ENCODE measurements at regions of chr1 and their contacts with region 1.

Region 1: GRCh38 chr1:8090241-8090702 is 64.2 kb upstream of the ERRFI1 start:
- DNase-seq: no peak
- ATAC-seq: peak; percentile 91
- H3K4me3 ChIP-seq: no peak overlapping the region
- H3K27ac ChIP-seq: peak overlapping the region; percentile 100
- H3K4me1 ChIP-seq: peaks cover 44% of the 10 kb centered on the region
- H3K27me3 ChIP-seq: no peaks in the 10 kb centered on the region
- CTCF ChIP-seq: no peak

Region 2: GRCh38 chr1:8061210-8061609 is 29.1 kb before region 1 on chr1:
- CTCF ChIA-PET with region 1: interaction called, 4 read pairs
- POLR2A ChIA-PET with region 1: interaction called, 11 read pairs
- in situ Hi-C with region 1: no loop called
- intact Hi-C with region 1: no loop called
- DNase-seq: peak; percentile 94
- ATAC-seq: peak; percentile 95
- H3K4me3 ChIP-seq: peak overlapping the region in 1 of 2 experiments; percentile 13; a peak in 1 of 4 replicates
- H3K27ac ChIP-seq: peak overlapping the region; percentile 99
- H3K4me1 ChIP-seq: peaks cover 53% of the 10 kb centered on the region
- H3K27me3 ChIP-seq: no peaks in the 10 kb centered on the region
- CTCF ChIP-seq: no peak

Region 3: DNA sequence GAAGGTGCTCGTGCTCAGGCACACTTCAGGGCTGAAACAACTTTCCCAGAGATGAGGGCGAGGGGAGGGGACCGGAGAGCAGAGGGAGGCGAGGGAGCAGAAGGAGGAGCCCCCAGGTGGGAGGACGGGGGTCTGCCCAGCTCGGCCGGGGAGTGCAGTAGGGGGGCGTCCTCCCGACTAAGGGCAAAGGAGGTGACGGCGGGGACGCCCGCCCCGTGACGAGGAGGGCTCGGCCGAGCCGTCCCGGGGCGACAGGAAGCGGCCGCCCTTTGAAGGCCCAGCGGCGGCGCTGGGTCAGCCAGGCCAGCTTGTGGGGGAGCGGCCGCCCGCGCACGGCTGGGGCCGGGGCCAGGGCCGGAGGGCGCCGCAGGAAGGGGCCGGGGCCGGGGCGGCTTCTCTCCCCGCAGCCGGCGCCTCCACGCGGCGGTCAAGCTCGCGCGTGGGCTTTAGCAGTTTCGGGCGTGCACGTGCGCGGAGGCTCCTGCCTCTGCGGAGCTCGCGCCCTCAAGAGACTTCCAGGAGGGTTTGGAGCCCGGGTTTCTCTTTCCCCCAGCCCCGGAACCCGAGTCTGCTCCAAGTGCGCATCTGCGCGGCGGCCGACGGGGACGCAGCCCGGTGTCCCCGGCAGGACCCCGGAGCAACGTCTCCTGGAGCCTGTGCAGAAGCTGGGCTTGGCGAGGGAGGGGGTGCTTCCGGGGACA is 126.9 kb after region 1 on chr1:
- CTCF ChIA-PET with region 1: no interaction called
- POLR2A ChIA-PET with region 1: no interaction called
- in situ Hi-C with region 1: no loop called
- intact Hi-C with region 1: no loop called
- DNase-seq: no peak
- ATAC-seq: no peak
- H3K4me3 ChIP-seq: no peak overlapping the region
- H3K27ac ChIP-seq: peak overlapping the region; percentile 55; the same call in 1 of the 2 replicates
- H3K4me1 ChIP-seq: peaks cover 26% of the 10 kb centered on the region
- H3K27me3 ChIP-seq: no peaks in the 10 kb centered on the region
- CTCF ChIP-seq: no peak

Region 4: GRCh38 chr1:8343464-8344001 is 253.3 kb after region 1 on chr1:
- CTCF ChIA-PET with region 1: no interaction called
- POLR2A ChIA-PET with region 1: interaction called, 16 read pairs
- in situ Hi-C with region 1: no loop called
- intact Hi-C with region 1: no loop called
- DNase-seq: peak; percentile 81
- ATAC-seq: peak; percentile 84
- H3K4me3 ChIP-seq: peak overlapping the region in 1 of 2 experiments; percentile 24; a peak in 1 of 4 replicates
- H3K27ac ChIP-seq: peak overlapping the region; percentile 90
- H3K4me1 ChIP-seq: peaks cover 26% of the 10 kb centered on the region
- H3K27me3 ChIP-seq: no peaks in the 10 kb centered on the region
- CTCF ChIP-seq: no peak